ENCODE measurements at regions of chr22 and their contacts with region 1.

Region 1: DNA sequence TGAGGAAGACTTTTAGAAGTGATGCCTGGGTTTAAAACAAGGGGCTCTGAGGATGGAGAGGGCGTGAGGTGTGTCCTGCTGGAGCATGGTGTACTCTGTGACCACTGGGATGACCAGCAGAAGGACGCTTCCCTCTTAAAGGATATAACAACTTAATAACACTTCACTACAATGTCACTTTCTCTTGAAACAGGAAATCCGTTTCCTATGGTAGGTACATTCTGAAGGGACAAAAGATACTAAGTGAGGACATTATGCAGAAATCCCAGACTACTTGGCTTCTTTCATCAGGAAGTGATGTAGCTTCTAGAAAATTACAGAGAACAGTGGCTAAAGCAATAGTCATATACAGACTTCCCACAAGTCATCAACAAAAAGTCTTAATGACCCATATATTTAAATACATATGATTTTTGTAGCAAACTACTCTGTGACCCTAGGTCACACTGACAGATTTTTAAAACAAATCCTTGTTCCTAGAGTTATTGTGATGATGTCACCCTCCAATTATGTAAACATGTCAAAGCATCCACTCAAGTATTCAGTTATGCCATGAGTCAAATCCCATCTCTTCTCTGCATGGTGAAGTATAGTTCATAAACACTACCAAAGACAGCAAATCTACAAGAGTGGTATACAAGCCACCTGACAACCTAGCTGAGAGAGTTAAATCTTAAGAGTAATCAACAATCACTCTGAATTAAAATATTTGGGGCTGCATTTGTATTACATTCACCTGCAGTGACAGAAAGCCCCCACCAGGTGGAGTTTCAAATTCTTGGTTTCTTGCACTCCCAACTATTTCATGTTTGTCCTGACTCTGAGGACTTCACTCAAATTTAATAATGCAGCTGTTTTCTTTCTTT is 32.8 kb downstream of the PITPNB start:
- DNase-seq: peak; percentile 54
- ATAC-seq: peak; percentile 61
- H3K4me3 Mint-ChIP-seq: no peak overlapping the region
- H3K27ac Mint-ChIP-seq: no peak overlapping the region
- H3K4me1 Mint-ChIP-seq: peaks cover 1% of the 10 kb centered on the region
- H3K27me3 Mint-ChIP-seq: no peaks in the 10 kb centered on the region
- CTCF ChIP-seq: peak; percentile 89

Region 2: DNA sequence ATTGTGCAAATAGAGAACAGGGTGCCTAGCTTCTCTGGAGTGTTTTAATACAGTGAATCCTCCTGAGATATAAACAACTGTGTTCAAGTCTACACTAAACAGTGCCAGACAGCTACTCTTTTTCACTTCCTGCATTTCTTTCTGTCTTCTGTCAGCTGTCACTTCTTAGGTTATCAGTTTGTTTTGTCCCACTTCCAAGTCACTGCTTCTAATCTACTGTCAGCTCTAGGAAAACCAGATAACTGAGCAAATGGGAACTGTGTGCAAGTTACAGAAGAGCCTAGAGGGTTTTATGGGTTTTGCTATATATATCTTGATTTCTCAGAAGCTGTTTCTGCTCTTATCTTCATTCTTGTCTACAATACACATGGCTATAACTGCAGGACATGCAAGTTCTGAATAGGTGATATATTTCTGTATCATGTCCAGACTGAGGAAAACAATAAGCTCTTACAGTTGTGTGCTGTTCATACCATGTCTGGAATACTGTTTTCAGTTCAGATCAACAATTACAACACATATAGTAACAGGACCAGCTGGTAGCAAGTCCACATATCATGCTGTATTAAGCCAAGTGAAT is 27.0 kb after region 1 on chr22:
- CTCF ChIA-PET with region 1: interaction called, 27 read pairs
- POLR2A ChIA-PET with region 1: interaction called, 5 read pairs
- intact Hi-C with region 1: no loop called
- DNase-seq: no peak
- ATAC-seq: no peak
- H3K4me3 Mint-ChIP-seq: no peak overlapping the region
- H3K27ac Mint-ChIP-seq: no peak overlapping the region
- H3K4me1 Mint-ChIP-seq: peaks cover 61% of the 10 kb centered on the region
- H3K27me3 Mint-ChIP-seq: no peaks in the 10 kb centered on the region
- CTCF ChIP-seq: no peak

Region 3: GRCh38 chr22:27919222-27919941 is 33.2 kb after region 1 on chr22 and contains the start of gene PITPNB:
- CTCF ChIA-PET with region 1: interaction called, 27 read pairs
- POLR2A ChIA-PET with region 1: interaction called, 5 read pairs
- intact Hi-C with region 1: no loop called
- DNase-seq: peak; percentile 96
- ATAC-seq: peak; percentile 90
- H3K4me3 Mint-ChIP-seq: peak within 1 kb of the TSS; percentile 95
- H3K27ac Mint-ChIP-seq: peak within 1 kb of the TSS; percentile 99
- H3K4me1 Mint-ChIP-seq: peaks cover 60% of the 10 kb centered on the region
- H3K27me3 Mint-ChIP-seq: no peaks in the 10 kb centered on the region
- CTCF ChIP-seq: no peak
- total RNA-seq, gene PITPNB: 87.7 to 89.1 TPM

Region 4: GRCh38 chr22:28009272-28009827 is 123.1 kb after region 1 on chr22:
- CTCF ChIA-PET with region 1: interaction called, 61 read pairs
- POLR2A ChIA-PET with region 1: no interaction called
- intact Hi-C with region 1: loop called (anchors 2 kb)
- DNase-seq: peak; percentile 85
- ATAC-seq: peak; percentile 85
- H3K4me3 Mint-ChIP-seq: no peak overlapping the region
- H3K27ac Mint-ChIP-seq: no peak overlapping the region
- H3K4me1 Mint-ChIP-seq: no peaks in the 10 kb centered on the region
- H3K27me3 Mint-ChIP-seq: no peaks in the 10 kb centered on the region
- CTCF ChIP-seq: peak; percentile 96

Measured in activated CD8-positive, alpha-beta T cell treated with anti-CD3 and anti-CD28 coated beads for 36 hours (primary cell).